ENCODE measurements at regions of chr7 and their contacts with region 1.

Region 1: DNA sequence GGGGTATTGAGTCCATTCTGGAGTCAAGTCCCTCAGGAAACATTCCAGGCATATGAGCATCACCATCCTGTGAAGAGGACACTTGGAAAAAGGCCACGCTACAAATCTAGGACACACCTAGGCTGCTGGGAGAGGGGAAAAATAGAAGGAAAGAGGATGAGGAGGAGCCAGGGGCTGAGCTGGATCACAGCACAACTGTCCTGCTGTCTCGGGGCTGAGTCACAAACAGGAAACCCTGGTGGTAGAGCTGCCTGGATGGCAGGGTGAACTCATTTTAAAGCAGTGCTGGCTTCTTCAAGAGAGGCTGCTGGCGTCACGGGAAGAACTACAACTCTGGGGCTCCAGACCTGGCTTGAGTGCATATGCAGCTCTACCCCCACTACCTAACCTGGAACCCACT is 151.5 kb downstream of the RNF216 start:
- DNase-seq: peak; percentile 61

Region 2: DNA sequence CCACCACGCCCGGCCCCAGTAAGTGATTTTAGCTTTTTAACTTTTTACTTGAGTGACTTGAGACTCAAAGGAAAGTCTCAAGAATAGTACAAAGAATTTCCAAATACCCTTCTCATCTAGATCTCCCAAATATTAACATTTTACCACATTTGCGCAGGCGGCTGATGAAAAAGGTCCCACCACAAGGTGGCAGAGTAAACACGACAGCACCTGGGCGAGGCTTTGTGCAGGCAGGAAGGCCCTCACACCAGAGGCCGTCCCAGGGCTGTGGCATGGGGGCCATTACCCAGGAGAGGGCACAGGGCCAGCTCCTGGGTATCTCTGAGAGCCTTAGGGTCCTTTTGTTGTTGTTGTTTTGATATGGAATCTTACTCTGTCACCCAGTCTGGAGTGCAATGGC is 489.9 kb before region 1 on chr7:
- in situ Hi-C with region 1: no loop called
- DNase-seq: peak; percentile 48

Region 3: DNA sequence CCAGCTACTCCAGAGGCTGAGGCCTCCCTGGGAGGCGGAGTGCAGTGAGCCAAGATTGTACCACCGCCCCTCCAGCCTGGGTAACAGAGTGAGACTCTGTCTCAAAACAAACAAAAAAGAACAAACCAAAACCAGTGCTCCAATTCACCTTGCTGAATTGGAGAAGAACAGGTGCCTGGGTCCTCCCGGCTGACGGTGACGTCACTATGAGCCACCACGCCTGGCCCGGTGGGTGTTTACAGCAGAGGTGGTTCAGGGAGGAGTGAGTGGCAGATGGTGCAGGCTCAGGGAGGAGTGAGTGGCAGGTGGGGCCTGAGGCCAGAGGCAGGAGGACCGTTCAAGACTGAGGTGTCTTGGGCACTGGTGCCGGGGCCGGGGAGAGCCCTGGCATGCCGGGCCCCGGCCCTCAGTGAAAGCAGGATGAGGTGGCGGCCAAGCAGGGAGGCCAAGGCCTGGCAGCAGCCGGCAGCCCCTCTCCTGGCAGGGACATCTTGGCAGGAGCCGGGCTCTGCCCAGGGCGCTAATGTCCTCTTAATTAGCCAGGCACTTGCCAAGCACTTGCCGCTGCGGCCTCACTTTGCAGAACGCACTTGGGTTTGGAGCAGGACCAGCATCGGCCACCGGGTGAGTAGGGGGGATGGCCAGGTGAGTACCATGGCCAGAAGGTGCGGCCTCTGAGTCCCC is 43.5 kb before region 1 on chr7:
- in situ Hi-C with region 1: loop called (anchors 5 kb)
- DNase-seq: no peak

Region 4: GRCh38 chr7:5679813-5680473 is 50.0 kb after region 1 on chr7:
- in situ Hi-C with region 1: loop called (anchors 5 kb)
- DNase-seq: no peak

Region 5: DNA sequence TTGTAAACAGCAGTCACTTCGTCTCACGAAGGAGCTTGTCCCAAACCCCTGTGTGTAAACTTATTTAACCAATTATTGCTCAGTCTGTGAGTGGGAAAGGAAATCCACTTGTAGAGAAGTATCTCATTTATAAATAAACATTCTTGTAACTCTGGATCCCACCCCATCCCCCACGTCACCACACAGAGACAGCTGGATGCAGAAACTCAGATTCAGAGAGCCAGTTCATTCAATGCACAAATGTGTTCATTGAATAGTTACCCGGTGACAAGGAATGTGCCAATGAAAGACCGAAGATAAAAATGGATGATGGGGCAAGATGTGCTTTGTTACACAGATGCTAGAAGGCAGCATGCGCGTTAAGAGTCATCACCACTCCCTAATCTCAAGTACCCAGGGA is 242.4 kb after region 1 on chr7:
- in situ Hi-C with region 1: no loop called
- DNase-seq: no peak

Measured in ACHN (cell line).